Caco-2 (cell line): ENCODE measurements at regions of chr18 and their contacts with region 1.

Region 1: DNA sequence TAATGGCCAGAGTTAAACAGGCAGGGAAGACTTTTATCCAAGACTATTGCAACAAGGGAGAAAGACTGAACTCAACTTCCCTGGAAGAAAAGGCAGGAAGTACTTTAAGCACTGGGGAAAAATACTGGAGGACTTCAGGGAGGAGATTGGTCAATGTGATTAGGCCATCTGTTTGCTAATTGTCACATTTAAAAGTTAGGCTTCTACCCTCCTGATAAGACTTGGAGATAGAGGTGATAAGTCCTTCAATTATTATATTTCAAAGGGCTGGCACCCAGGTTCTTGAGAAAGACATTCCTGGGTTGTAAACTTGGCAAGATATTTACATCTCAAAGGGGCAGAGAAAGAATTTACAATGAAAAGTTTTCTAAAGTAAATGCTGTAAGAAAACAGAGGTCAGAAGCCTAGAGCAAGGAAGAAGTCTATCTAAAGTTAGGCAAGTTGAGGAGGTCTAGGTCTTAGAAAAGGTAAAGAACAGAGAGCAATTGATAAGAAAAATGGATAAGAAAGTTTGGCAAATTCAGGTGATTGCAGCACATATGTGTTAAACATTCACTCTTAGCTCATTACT is 48.4 kb downstream of the DTNA start:
- DNase-seq: peak; percentile 26 to 50
- H3K4me3 ChIP-seq: no peak overlapping the region
- H3K4me3 Mint-ChIP-seq: peak overlapping the region; percentile 44
- H3K27ac Mint-ChIP-seq: peak overlapping the region; percentile 48
- H3K4me1 ChIP-seq: peaks cover 13% of the 10 kb centered on the region
- H3K4me1 Mint-ChIP-seq: peaks cover 21% of the 10 kb centered on the region
- H3K27me3 ChIP-seq: no peaks in the 10 kb centered on the region
- H3K27me3 Mint-ChIP-seq: no peaks in the 10 kb centered on the region
- CTCF ChIP-seq: no peak

Region 2: DNA sequence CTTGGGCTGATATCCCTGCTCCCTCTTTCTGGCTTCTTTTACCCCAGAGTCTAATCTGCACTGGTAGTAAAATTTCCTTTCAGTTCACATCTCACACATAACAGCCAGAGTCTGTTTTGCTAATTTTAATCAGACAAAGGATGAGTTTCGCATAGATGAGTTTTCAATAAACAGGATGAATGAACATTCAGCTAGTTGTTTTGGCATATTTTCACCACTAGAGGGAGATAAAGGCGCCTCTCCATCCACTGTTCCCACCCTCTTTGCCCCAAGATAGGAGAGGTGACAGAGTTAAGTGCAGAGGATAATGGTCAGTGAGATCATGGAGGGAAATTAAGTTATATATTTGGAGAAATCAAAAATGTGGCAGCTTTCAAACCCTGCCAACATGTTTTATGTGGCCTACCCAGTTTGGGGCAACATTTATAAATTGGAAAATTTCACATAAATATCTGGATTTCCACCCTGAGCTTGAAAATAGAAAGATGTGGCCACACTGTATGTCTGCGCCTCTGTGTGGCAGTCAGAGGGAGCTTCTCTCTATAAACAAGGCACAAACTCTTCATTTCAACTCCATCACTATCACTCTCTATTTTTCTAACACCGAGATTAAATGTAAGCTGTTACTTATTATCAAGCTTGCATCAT is 96.9 kb before region 1 on chr18:
- CTCF ChIA-PET with region 1: interaction called, 3 read pairs
- POLR2A ChIA-PET with region 1: no interaction called
- intact Hi-C with region 1: loop called (anchors 1 kb)
- DNase-seq: peak in 1 of 2 experiments; percentile 30
- H3K4me3 ChIP-seq: no peak overlapping the region
- H3K4me3 Mint-ChIP-seq: no peak overlapping the region
- H3K27ac Mint-ChIP-seq: no peak overlapping the region
- H3K4me1 ChIP-seq: no peaks in the 10 kb centered on the region
- H3K4me1 Mint-ChIP-seq: peaks cover 6% of the 10 kb centered on the region
- H3K27me3 ChIP-seq: no peaks in the 10 kb centered on the region
- H3K27me3 Mint-ChIP-seq: no peaks in the 10 kb centered on the region
- CTCF ChIP-seq: peak; percentile 46 to 60

Region 3: GRCh38 chr18:34729264-34729663 is 29.2 kb before region 1 on chr18:
- CTCF ChIA-PET with region 1: no interaction called
- POLR2A ChIA-PET with region 1: no interaction called
- intact Hi-C with region 1: loop called (anchors 1 kb)
- DNase-seq: peak in 1 of 2 experiments; percentile 37
- H3K4me3 ChIP-seq: no peak overlapping the region
- H3K4me3 Mint-ChIP-seq: no peak overlapping the region
- H3K27ac Mint-ChIP-seq: no peak overlapping the region
- H3K4me1 ChIP-seq: peaks cover 15% of the 10 kb centered on the region
- H3K4me1 Mint-ChIP-seq: peaks cover 10% of the 10 kb centered on the region
- H3K27me3 ChIP-seq: no peaks in the 10 kb centered on the region
- H3K27me3 Mint-ChIP-seq: no peaks in the 10 kb centered on the region
- CTCF ChIP-seq: peak; percentile 14 to 44

Region 4: GRCh38 chr18:34738176-34738894 is 20.1 kb before region 1 on chr18:
- CTCF ChIA-PET with region 1: no interaction called
- POLR2A ChIA-PET with region 1: no interaction called
- intact Hi-C with region 1: loop called (anchors 1 kb)
- DNase-seq: peak; percentile 37 to 48
- H3K4me3 ChIP-seq: no peak overlapping the region
- H3K4me3 Mint-ChIP-seq: peak overlapping the region; percentile 65
- H3K27ac Mint-ChIP-seq: peak overlapping the region; percentile 95
- H3K4me1 ChIP-seq: peaks cover 14% of the 10 kb centered on the region
- H3K4me1 Mint-ChIP-seq: peaks cover 7% of the 10 kb centered on the region
- H3K27me3 ChIP-seq: no peaks in the 10 kb centered on the region
- H3K27me3 Mint-ChIP-seq: no peaks in the 10 kb centered on the region
- CTCF ChIP-seq: no peak

Region 5: DNA sequence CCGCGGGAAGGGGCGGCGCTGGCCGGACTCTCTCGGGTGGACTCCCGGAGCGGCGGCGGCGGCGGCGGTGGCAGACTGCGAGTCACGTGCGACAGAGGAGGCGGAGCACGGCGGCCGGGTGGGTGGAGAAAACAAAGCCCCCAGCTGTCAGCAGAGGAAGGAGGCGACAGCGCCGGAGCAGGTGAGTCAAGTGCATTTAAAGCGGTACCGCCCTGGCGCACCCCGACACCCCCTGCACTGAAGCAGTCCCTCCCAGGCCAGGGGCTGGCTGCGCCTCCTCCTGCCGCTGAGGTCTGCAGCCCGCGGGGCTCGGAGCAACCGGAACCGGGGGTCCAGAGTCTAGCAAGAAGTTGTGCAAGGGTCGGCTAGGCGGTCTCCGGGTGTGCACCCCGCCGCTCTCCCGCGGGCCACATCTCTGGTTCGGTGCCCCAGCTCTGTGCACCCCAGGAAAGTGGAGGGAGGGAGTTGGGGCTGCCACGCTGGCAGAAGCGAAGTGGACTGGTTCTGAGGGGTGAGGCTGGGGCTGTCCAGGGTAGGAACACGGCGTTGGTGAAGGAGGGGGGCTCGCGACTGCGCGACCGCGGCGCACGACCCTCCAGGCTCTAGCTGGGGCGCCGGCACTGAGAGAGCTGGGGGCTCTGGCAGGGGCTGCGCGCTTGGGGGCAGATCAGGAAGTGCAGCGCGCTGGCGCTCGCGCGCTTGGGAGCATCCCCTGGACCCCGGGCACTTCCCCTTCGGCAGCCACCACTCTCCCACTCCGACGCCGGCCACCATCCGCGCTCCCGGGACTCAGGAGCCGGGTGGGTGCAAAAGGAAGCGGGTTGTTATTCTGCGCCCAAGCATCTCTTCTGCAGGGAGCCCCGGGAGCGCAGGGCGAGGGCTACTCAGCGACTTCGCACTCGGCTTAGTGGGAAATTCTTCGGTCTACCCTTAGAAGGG is 218.7 kb after region 1 on chr18:
- CTCF ChIA-PET with region 1: no interaction called
- POLR2A ChIA-PET with region 1: no interaction called
- intact Hi-C with region 1: no loop called
- DNase-seq: peak; percentile 62 to 74
- H3K4me3 ChIP-seq: peak overlapping the region; percentile 72
- H3K4me3 Mint-ChIP-seq: peak overlapping the region; percentile 77
- H3K27ac Mint-ChIP-seq: peak overlapping the region; percentile 48
- H3K4me1 ChIP-seq: no peaks in the 10 kb centered on the region
- H3K4me1 Mint-ChIP-seq: no peaks in the 10 kb centered on the region
- H3K27me3 ChIP-seq: no peaks in the 10 kb centered on the region
- H3K27me3 Mint-ChIP-seq: no peaks in the 10 kb centered on the region
- CTCF ChIP-seq: no peak

Region 6: GRCh38 chr18:35158728-35159450 is 400.4 kb after region 1 on chr18:
- CTCF ChIA-PET with region 1: no interaction called
- POLR2A ChIA-PET with region 1: no interaction called
- intact Hi-C with region 1: no loop called
- DNase-seq: no peak
- H3K4me3 ChIP-seq: no peak overlapping the region
- H3K4me3 Mint-ChIP-seq: no peak overlapping the region
- H3K27ac Mint-ChIP-seq: no peak overlapping the region
- H3K4me1 ChIP-seq: no peaks in the 10 kb centered on the region
- H3K4me1 Mint-ChIP-seq: no peaks in the 10 kb centered on the region
- H3K27me3 ChIP-seq: no peaks in the 10 kb centered on the region
- H3K27me3 Mint-ChIP-seq: no peaks in the 10 kb centered on the region
- CTCF ChIP-seq: no peak

Region 7: DNA sequence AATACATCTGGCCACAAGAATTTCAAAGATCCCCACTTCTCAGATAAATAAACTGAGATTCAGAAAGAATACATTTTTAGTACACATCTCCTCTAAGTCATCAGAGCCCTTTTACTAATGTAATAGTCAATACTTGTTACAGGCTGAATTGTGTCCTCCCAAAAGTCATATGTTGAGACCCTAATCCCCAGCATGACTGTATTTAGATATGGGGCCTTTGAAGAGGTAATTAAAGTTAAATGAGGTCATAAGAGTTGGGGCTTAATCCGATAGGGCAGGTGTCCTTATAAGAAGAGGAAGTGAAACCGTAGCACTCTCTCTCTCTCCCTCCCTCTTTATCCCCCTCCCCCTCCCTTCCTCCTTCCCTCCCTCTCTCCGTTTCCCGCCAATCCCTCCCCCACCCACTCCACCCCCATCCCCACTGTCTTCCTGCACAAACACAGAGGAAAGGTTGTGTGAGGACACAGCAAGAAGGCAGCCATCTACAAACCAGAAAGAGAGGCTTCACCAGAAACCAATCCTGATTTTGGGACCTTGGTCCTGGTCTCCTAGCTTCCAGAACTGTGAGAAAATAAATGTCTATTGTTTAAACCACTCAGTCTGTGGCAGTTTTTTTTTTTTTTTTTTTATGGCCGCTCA is 415.7 kb after region 1 on chr18:
- CTCF ChIA-PET with region 1: no interaction called
- POLR2A ChIA-PET with region 1: no interaction called
- intact Hi-C with region 1: no loop called
- DNase-seq: no peak
- H3K4me3 ChIP-seq: no peak overlapping the region
- H3K4me3 Mint-ChIP-seq: no peak overlapping the region
- H3K27ac Mint-ChIP-seq: no peak overlapping the region
- H3K4me1 ChIP-seq: no peaks in the 10 kb centered on the region
- H3K4me1 Mint-ChIP-seq: no peaks in the 10 kb centered on the region
- H3K27me3 ChIP-seq: no peaks in the 10 kb centered on the region
- H3K27me3 Mint-ChIP-seq: no peaks in the 10 kb centered on the region
- CTCF ChIP-seq: no peak